GM12878 (cell line): ENCODE measurements at regions of chr6 and their contacts with region 1.

Region 1: GRCh38 chr6:80214436-80215022 is 108.1 kb downstream of the BCKDHB start:
- DNase-seq: no peak
- ATAC-seq: peak; percentile 94
- H3K4me3 ChIP-seq: no peak overlapping the region
- H3K27ac ChIP-seq: no peak overlapping the region
- H3K4me1 ChIP-seq: peaks cover 3% of the 10 kb centered on the region
- H3K27me3 ChIP-seq: no peaks in the 10 kb centered on the region
- CTCF ChIP-seq: peak; percentile 70 to 74 (median 72)
- EP300 ChIP-seq: no peak
- POLR2A ChIP-seq: no peak
- RAD21 ChIP-seq: peak; percentile 82

Region 2: DNA sequence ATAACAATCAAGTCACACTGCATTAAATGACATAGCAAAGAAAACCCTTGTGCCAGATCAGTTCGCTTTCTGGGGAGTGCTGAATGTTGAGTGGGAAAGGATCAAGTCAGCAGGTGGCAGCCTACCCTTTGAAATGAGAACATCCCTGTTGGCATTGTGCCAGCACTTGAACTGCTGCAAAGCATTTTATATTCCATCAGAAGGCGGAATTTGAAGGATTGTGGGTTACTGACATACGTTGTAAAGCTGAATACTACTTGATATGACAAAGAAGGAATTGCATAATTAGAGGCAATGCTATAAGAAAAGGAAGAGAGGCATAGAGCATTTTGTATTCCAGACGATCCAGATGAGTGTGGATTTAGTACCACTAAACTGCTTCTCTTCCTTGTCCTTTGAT is 81.5 kb before region 1 on chr6:
- CTCF ChIA-PET with region 1: interaction called, 14 read pairs
- POLR2A ChIA-PET with region 1: interaction called, 4 read pairs
- RAD21 ChIA-PET with region 1: interaction called, 4 read pairs
- SMC1A ChIA-PET with region 1: no interaction called
- in situ Hi-C with region 1: no loop called
- intact Hi-C with region 1: no loop called
- DNase-seq: no peak
- ATAC-seq: no peak
- H3K4me3 ChIP-seq: no peak overlapping the region
- H3K27ac ChIP-seq: no peak overlapping the region
- H3K4me1 ChIP-seq: no peaks in the 10 kb centered on the region
- H3K27me3 ChIP-seq: no peaks in the 10 kb centered on the region
- CTCF ChIP-seq: peak in 2 of 3 experiments; percentile 16 to 43; a peak in 2 of 6 replicates
- EP300 ChIP-seq: no peak
- POLR2A ChIP-seq: no peak
- RAD21 ChIP-seq: peak; percentile 63

Region 3: DNA sequence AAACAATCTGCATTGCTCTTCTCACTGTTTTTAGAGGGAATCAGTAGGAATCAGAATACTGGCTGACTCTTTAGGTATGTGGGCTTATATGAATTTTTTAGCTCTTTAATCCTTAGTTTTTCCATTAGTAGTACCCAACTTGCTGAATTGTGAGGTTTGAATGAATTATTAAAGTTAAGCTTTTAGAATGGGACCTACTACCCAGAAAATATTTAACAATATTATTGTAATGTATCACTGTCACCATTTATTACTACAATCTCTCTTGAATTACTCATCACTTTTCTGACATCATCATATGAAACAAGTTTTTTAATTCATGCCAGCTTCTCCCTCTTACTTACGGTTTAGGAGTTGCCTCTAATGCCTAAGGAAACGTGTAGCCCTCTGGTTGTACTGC is 104.7 kb after region 1 on chr6:
- CTCF ChIA-PET with region 1: no interaction called
- POLR2A ChIA-PET with region 1: no interaction called
- RAD21 ChIA-PET with region 1: no interaction called
- SMC1A ChIA-PET with region 1: no interaction called
- in situ Hi-C with region 1: no loop called
- intact Hi-C with region 1: no loop called
- DNase-seq: no peak
- ATAC-seq: no peak
- H3K4me3 ChIP-seq: no peak overlapping the region
- H3K27ac ChIP-seq: no peak overlapping the region
- H3K4me1 ChIP-seq: no peaks in the 10 kb centered on the region
- H3K27me3 ChIP-seq: no peaks in the 10 kb centered on the region
- CTCF ChIP-seq: no peak
- EP300 ChIP-seq: no peak
- POLR2A ChIP-seq: no peak
- RAD21 ChIP-seq: no peak

Region 4: DNA sequence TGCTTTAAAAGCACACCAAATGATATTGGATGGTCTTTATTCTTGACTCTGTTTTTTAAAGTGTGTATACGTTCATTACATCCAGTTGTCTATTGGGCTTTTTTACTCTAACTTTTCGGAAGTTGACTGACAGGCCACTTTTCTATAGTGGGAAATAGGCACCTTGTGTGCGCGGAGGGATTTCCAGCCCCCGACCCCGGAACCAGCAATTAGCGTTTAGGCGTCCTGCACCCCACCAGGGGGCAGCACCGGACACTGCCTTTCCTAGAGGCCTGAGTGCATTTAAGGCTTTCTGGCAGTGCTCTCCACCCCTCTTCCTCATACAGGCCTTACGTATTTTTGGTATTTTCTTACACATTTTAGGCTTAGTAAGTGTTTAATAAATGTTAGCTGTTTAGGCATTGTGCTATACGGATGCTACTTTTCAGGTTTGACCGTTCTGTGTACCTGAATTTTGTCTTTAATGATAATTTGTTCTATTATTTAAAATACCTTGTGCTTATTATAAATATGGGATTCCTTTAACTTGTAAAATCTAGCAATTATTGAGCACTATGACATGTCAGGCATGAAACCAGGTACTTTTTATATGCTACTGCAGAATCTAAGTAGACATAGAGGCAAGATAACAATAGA is 123.8 kb after region 1 on chr6:
- CTCF ChIA-PET with region 1: interaction called, 19 read pairs
- POLR2A ChIA-PET with region 1: no interaction called
- RAD21 ChIA-PET with region 1: no interaction called
- SMC1A ChIA-PET with region 1: interaction called, 3 read pairs
- in situ Hi-C with region 1: no loop called
- intact Hi-C with region 1: loop called (anchors 5 kb)
- DNase-seq: no peak
- ATAC-seq: peak; percentile 78
- H3K4me3 ChIP-seq: no peak overlapping the region
- H3K27ac ChIP-seq: no peak overlapping the region
- H3K4me1 ChIP-seq: no peaks in the 10 kb centered on the region
- H3K27me3 ChIP-seq: no peaks in the 10 kb centered on the region
- CTCF ChIP-seq: peak; percentile 30 to 70 (median 68)
- EP300 ChIP-seq: no peak
- POLR2A ChIP-seq: no peak
- RAD21 ChIP-seq: peak; percentile 42

Region 5: DNA sequence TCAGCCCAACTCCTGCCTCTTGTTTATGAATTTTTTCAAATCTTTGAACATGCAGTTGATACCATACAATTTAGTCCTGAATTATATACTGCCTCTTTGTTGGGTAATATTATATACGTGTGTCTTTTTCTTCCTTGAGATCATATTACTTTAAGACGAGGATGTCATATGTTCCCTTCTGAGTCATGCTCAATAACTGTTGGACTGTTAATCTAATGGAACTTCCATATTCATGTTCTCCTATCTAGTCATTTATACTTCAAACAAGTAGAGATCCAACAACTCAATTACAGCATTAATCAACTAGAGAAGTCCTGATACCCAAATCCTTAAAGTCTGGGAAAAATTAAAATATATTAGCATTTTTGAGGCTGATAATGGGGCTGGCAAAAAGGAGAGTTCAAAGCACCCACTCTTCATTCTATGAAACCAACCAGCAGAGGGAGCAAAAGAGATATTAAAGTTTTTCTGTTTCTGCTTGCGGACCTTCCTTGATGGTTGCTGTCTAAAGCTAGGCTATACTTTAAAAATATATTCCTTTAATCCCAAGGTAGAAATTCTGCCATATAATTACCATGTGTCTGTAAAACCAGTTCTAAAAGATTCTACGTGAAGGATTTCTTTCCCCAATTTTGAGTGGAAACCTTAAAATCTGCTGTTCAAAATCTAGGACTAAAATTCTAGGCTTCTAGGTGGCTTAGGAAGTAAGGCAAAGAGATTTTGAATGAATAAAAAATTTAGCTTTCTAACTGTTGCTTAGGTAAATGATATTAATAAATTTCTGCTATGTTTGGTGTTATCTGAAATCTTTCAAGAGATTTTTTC is 390.8 kb after region 1 on chr6:
- CTCF ChIA-PET with region 1: interaction called, 3 read pairs
- POLR2A ChIA-PET with region 1: no interaction called
- RAD21 ChIA-PET with region 1: interaction called, 7 read pairs
- SMC1A ChIA-PET with region 1: interaction called, 6 read pairs
- in situ Hi-C with region 1: no loop called
- intact Hi-C with region 1: loop called (anchors 5 kb)
- DNase-seq: no peak
- ATAC-seq: peak; percentile 74
- H3K4me3 ChIP-seq: no peak overlapping the region
- H3K27ac ChIP-seq: no peak overlapping the region
- H3K4me1 ChIP-seq: no peaks in the 10 kb centered on the region
- H3K27me3 ChIP-seq: no peaks in the 10 kb centered on the region
- CTCF ChIP-seq: peak; percentile 30 to 52 (median 43); a peak in 4 of 6 replicates
- EP300 ChIP-seq: no peak
- POLR2A ChIP-seq: no peak
- RAD21 ChIP-seq: peak; percentile 51

Region 6: DNA sequence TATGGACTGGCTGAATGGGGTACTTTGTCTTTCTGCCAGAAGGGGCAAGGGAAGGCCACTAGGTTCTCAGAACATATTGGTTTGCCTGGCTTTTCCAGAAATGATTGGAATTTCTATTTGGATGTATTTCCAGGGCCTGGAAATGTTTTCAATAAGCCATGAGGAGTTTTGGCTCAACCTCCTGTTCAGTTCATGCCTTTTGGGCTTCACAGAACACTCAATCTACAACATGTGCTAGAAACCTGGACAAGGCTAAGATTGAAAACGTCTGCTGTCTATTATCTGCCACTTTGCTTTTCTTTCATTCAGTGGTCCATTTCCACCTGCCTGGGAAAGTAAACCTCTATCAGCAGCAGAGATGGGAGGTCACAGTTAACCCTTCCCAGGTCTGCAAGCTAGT is 744.5 kb after region 1 on chr6:
- CTCF ChIA-PET with region 1: no interaction called
- POLR2A ChIA-PET with region 1: no interaction called
- RAD21 ChIA-PET with region 1: no interaction called
- SMC1A ChIA-PET with region 1: no interaction called
- in situ Hi-C with region 1: no loop called
- intact Hi-C with region 1: loop called (anchors 10 kb)
- DNase-seq: no peak
- ATAC-seq: no peak
- H3K4me3 ChIP-seq: no peak overlapping the region
- H3K27ac ChIP-seq: no peak overlapping the region
- H3K4me1 ChIP-seq: no peaks in the 10 kb centered on the region
- H3K27me3 ChIP-seq: no peaks in the 10 kb centered on the region
- CTCF ChIP-seq: no peak
- EP300 ChIP-seq: no peak
- POLR2A ChIP-seq: no peak
- RAD21 ChIP-seq: no peak